ENCODE measurements at regions of chr16 and their contacts with region 1.

Region 1: GRCh38 chr16:30032083-30032819 is 1.2 kb upstream of the TLCD3B start:
- DNase-seq: peak; percentile 81
- H3K4me3 Mint-ChIP-seq: no peak overlapping the region
- H3K27ac Mint-ChIP-seq: no peak overlapping the region
- H3K4me1 Mint-ChIP-seq: peaks cover 10% of the 10 kb centered on the region
- H3K27me3 Mint-ChIP-seq: peaks cover 38% of the 10 kb centered on the region

Region 2: GRCh38 chr16:29694384-29695195 is 337.7 kb before region 1 on chr16:
- CTCF ChIA-PET with region 1: interaction called, 15 read pairs
- intact Hi-C with region 1: no loop called
- DNase-seq: no peak
- H3K4me3 Mint-ChIP-seq: no peak overlapping the region
- H3K27ac Mint-ChIP-seq: no peak overlapping the region
- H3K4me1 Mint-ChIP-seq: peaks cover 5% of the 10 kb centered on the region
- H3K27me3 Mint-ChIP-seq: no peaks in the 10 kb centered on the region

Region 3: DNA sequence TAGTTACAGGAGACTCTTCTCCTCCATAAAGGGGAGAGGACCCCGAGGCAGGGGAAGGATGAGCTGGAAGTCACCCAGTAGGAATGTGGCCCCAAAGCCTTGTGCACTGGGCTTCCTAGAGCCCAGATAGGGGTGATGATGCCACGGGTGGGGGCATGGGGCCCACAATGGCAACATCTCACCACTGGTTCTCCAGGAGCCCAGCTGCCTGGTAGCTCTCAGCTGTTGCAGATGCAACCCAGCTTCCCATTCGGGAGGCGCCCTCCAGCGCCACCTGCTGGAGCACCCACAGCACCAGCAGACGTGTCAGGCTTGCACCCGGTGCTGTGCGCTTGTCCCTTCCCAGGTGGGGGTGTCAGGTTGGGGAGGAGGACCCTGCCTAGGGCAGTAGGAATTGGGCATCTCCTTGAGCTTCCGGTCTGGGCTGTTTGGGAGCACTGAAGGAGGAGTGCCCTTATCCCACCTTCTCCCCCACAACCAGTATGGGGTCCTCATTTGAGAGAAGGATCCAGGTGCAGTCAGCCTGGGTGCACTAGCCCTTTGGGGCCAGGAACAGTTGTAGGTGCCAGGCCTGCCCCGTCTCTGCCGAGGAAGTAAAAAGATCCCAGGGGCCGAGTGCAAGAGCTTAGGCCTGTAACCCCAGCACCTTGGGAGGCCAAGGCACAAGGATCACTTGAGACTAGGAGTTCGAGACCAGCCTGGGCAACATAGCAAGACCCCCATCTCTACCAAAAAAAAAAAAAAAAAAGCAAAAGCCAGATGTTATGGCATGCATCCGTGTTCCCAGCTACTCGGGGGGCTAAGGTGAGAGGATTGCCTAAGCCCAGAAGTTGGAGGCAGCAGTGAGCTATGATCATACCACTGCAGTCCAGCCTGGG is 183.6 kb before region 1 on chr16:
- CTCF ChIA-PET with region 1: interaction called, 11 read pairs
- intact Hi-C with region 1: no loop called
- DNase-seq: peak; percentile 91
- H3K4me3 Mint-ChIP-seq: no peak overlapping the region
- H3K27ac Mint-ChIP-seq: no peak overlapping the region
- H3K4me1 Mint-ChIP-seq: peaks cover 5% of the 10 kb centered on the region
- H3K27me3 Mint-ChIP-seq: no peaks in the 10 kb centered on the region

Region 4: GRCh38 chr16:29926005-29926710 is 106.1 kb before region 1 on chr16 and contains the start of gene KCTD13:
- CTCF ChIA-PET with region 1: interaction called, 9 read pairs
- intact Hi-C with region 1: loop called (anchors 10 kb)
- DNase-seq: peak; percentile 86
- H3K4me3 Mint-ChIP-seq: peak within 1 kb of the TSS; percentile 91
- H3K27ac Mint-ChIP-seq: peak within 1 kb of the TSS; percentile 88
- H3K4me1 Mint-ChIP-seq: peaks cover 32% of the 10 kb centered on the region
- H3K27me3 Mint-ChIP-seq: no peaks in the 10 kb centered on the region
- total RNA-seq, gene KCTD13: 25.8 to 29.4 TPM

Region 5: GRCh38 chr16:30010844-30011713 is 21.2 kb before region 1 on chr16 and contains the start of gene DOC2A:
- CTCF ChIA-PET with region 1: interaction called, 6 read pairs
- intact Hi-C with region 1: loop called (anchors 1 kb)
- DNase-seq: peak; percentile 47
- H3K4me3 Mint-ChIP-seq: peak within 1 kb of the TSS; percentile 72
- H3K27ac Mint-ChIP-seq: no peak within 1 kb of the TSS
- H3K4me1 Mint-ChIP-seq: peaks cover 7% of the 10 kb centered on the region
- H3K27me3 Mint-ChIP-seq: peaks cover 18% of the 10 kb centered on the region
- total RNA-seq, gene DOC2A: 0.64 to 0.86 TPM

Region 6: GRCh38 chr16:30018731-30019158 is 13.5 kb before region 1 on chr16:
- CTCF ChIA-PET with region 1: interaction called, 26 read pairs
- intact Hi-C with region 1: no loop called
- DNase-seq: no peak
- H3K4me3 Mint-ChIP-seq: no peak overlapping the region
- H3K27ac Mint-ChIP-seq: no peak overlapping the region
- H3K4me1 Mint-ChIP-seq: peaks cover 3% of the 10 kb centered on the region
- H3K27me3 Mint-ChIP-seq: no peaks in the 10 kb centered on the region

Region 7: DNA sequence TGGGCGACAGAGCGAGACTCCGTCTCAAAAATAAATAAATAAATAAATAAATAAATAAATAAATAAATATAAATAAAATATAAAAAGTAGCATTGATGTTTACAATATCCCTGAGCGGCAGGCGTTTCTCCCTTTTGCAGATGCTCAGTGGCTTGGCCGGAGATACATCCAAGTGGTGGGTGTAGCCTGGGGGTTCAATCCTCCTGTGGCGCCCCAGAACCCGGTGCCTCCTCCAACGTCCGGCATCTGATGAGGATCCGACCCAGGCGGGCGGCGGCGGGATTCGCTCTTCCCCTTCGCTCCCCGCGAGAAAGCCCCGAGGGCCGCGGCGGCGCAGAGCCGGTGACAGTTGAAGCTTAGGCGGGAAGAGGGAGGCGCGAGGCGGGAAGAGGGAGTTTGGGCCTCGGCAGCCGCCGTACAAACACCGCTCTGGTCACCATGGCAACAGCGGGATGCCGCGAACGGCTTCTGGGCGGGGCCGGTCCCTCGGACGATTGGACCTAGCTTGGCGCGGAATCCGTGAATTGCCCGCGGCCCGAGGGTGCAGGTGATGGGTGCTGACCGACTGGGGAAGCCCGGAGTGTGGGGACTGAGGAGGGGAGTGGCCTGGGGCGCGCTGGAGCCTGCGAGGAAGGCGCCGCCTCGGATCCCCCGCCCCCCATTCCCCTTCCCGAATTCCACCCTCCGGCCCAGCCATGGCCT is 20.6 kb after region 1 on chr16:
- CTCF ChIA-PET with region 1: interaction called, 15 read pairs
- intact Hi-C with region 1: no loop called
- DNase-seq: peak; percentile 95
- H3K4me3 Mint-ChIP-seq: peak overlapping the region; percentile 87
- H3K27ac Mint-ChIP-seq: peak overlapping the region; percentile 48
- H3K4me1 Mint-ChIP-seq: peaks cover 20% of the 10 kb centered on the region
- H3K27me3 Mint-ChIP-seq: no peaks in the 10 kb centered on the region